Heart right ventricle (tissue), 16 donors: ENCODE measurements at regions of chr7 and their contacts with region 1.

Region 1: GRCh38 chr7:114777288-114777687 is 144.6 kb upstream of the MDFIC start:
- DNase-seq: no peak
- ATAC-seq: no peak
- H3K4me3 ChIP-seq: no peak overlapping the region
- H3K27ac ChIP-seq: no peak overlapping the region
- H3K4me1 ChIP-seq: no peaks in the 10 kb centered on the region
- H3K27me3 ChIP-seq: no peaks in the 10 kb centered on the region
- CTCF ChIP-seq: no peak

Region 2: GRCh38 chr7:114851406-114852061 is 74.2 kb after region 1 on chr7:
- intact Hi-C with region 1: loop called in 1 of 10 experiments (anchors 2 kb)
- DNase-seq: no peak
- ATAC-seq: no peak
- H3K4me3 ChIP-seq: no peak overlapping the region
- H3K27ac ChIP-seq: no peak overlapping the region
- H3K4me1 ChIP-seq: no peaks in the 10 kb centered on the region
- H3K27me3 ChIP-seq: no peaks in the 10 kb centered on the region
- CTCF ChIP-seq: no peak